ENCODE measurements at regions of chr2 and their contacts with region 1.

Region 1: DNA sequence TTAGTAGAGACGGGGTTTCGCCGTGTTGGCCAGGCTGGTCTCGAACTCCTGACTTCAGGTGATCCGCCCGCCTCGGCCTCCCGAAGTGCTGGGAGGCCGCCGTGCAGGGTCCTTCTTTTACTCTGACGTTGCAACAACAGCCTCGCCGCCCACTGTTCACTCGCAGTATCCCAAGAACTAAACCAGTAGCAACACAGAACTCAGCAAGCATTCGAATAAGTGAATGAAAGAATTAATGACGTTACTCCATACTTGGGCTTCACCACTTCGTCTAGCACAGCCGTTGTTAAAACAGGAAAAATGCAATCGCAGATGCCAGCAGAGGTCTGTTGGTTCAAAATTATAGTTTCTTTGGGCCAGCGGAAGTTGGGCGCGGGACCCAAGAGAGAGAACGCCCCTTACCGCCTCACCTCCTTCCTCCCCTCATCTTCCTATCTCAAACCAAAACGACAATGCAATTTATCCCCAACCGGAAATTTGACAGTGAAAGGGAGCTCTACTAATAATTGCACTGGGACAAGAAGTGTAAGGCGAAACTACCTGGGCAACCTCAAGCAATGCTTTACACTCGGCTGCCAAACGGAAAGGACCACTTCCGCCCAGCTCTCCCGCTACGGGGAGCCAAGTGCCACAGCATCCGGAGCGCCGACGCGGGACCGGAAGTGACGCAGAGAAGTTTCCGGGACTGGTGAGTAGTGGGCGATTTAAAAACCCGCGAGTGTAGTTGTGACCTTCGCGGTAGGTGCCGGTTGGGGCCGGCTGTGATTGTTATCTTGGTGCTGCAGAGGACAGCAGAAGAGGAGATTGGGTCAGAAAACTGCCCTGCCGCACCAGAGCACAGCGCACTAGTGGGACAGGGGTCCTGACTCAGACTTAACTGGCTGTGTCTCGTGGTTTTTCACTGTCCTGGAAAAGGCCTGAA is at the starts of genes NIF3L1 and PPIL3:
- DNase-seq: peak; percentile 90
- ATAC-seq: peak; percentile 80
- H3K4me3 Mint-ChIP-seq: peak within 1 kb of the TSS; percentile 99
- H3K27ac Mint-ChIP-seq: peak within 1 kb of the TSS; percentile 100
- H3K4me1 Mint-ChIP-seq: peaks cover 40% of the 10 kb centered on the region
- H3K27me3 Mint-ChIP-seq: no peaks in the 10 kb centered on the region
- CTCF ChIP-seq: no peak
- total RNA-seq, gene NIF3L1: 32.2 and 32.3 TPM in 2 replicates
- total RNA-seq, gene PPIL3: 43.5 and 52.5 TPM in 2 replicates

Region 2: DNA sequence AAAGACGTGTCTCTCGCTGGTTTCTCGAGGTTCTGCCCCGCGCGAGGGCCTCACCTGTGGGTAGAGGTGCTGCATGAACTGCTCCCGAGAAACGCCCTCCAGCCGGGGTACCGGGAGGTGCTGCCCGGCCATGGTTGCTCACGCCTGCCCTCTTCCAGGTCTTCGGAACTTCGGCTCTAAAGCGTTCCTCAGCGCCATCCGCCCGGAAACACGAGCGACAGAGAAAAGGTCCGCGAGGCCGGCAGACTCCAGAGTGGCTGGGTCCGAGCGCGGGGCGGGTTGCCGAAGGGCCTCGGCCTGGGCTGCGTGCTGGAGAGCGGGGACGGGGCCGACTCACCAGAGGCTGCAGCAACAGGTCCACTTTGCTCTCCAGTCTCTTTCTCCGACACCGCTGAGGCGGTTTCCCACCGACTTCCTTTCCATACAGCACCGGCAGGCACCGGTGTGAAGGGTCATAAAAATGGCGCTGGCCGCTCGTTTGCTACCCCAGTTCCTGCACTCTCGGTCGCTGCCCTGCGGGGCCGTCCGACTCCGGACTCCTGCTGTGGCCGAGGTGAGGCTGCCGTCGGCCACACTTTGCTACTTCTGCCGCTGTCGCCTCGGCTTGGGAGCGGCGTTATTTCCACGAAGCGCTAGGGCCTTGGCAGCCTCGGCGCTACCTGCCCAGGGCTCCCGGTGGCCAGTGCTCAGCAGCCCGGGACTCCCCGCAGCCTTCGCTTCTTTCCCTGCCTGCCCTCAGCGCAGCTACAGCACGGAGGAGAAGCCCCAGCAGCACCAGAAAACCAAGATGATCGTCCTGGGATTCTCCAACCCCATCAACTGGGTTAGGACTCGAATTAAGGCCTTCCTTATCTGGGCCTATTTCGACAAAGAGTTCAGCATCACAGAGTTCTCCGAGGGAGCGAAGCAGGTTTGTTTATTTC is 933.4 kb before region 1 on chr2 and contains the starts of genes MAIP1 and TYW5:
- CTCF ChIA-PET with region 1: no interaction called
- POLR2A ChIA-PET with region 1: no interaction called
- intact Hi-C with region 1: loop called (anchors 5 kb)
- DNase-seq: peak; percentile 75
- ATAC-seq: peak; percentile 87
- H3K4me3 Mint-ChIP-seq: peak within 1 kb of the TSS; percentile 99
- H3K27ac Mint-ChIP-seq: peak within 1 kb of the TSS; percentile 91
- H3K4me1 Mint-ChIP-seq: peaks cover 48% of the 10 kb centered on the region
- H3K27me3 Mint-ChIP-seq: no peaks in the 10 kb centered on the region
- CTCF ChIP-seq: no peak
- total RNA-seq, gene MAIP1: 20.2 and 20.7 TPM in 2 replicates
- total RNA-seq, gene TYW5: 10.5 and 12.5 TPM in 2 replicates

Region 3: DNA sequence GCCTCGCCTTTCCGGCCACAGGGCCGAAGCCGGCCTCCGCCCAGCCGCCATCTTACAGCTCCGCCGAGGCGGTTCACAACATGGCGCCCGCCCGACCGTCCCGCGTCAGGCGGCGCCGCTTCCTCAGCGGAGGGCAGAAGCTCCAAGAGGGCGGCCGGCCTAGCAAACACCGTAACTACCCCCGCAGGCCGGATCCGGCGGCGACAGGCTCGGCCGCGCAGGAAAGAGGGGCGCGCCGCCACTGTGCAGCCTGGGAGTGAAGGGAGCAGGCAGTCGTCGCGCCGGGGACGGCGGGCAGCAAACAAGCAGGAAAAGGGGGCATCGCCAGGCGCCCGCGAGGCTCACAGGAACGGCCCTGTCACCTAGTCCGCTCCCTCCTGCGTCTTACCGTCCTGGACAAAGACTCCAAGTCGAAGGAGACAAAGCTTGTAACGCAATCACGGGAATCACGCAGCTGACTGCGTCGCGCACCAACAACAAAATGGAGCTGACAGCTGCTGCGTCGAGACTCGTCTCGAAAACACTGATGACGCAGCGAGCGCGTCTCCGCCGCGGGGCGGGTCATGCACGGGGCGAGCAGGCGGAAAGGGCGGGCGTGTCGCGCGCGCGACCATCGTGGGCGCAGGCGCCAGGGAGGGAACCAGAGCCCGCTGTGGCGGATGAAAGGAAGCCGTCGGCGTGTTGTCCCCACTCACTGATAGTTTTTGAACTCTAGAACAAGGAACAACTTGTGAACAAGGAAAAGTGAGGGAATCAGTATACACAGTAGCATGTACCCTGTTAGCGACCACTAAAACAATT is 24.6 kb before region 1 on chr2 and contains the start of gene CLK1:
- CTCF ChIA-PET with region 1: interaction called, 4 read pairs
- POLR2A ChIA-PET with region 1: interaction called, 117 read pairs
- intact Hi-C with region 1: loop called (anchors 1 kb)
- DNase-seq: peak; percentile 90
- ATAC-seq: peak; percentile 82
- H3K4me3 Mint-ChIP-seq: peak within 1 kb of the TSS; percentile 100
- H3K27ac Mint-ChIP-seq: peak within 1 kb of the TSS; percentile 100
- H3K4me1 Mint-ChIP-seq: peaks cover 41% of the 10 kb centered on the region
- H3K27me3 Mint-ChIP-seq: no peaks in the 10 kb centered on the region
- CTCF ChIP-seq: no peak
- total RNA-seq, gene CLK1: 173 and 203 TPM in 2 replicates